ENCODE measurements at regions of chr5 and their contacts with region 1.

Region 1: GRCh38 chr5:55172051-55172899 is 702 bp downstream of the CDC20B start:
- DNase-seq: peak; percentile 73
- ATAC-seq: peak; percentile 71
- H3K4me3 Mint-ChIP-seq: peak overlapping the region; percentile 75
- H3K27ac Mint-ChIP-seq: no peak overlapping the region
- H3K4me1 Mint-ChIP-seq: peaks cover 37% of the 10 kb centered on the region
- H3K27me3 Mint-ChIP-seq: peaks cover 58% of the 10 kb centered on the region

Region 2: DNA sequence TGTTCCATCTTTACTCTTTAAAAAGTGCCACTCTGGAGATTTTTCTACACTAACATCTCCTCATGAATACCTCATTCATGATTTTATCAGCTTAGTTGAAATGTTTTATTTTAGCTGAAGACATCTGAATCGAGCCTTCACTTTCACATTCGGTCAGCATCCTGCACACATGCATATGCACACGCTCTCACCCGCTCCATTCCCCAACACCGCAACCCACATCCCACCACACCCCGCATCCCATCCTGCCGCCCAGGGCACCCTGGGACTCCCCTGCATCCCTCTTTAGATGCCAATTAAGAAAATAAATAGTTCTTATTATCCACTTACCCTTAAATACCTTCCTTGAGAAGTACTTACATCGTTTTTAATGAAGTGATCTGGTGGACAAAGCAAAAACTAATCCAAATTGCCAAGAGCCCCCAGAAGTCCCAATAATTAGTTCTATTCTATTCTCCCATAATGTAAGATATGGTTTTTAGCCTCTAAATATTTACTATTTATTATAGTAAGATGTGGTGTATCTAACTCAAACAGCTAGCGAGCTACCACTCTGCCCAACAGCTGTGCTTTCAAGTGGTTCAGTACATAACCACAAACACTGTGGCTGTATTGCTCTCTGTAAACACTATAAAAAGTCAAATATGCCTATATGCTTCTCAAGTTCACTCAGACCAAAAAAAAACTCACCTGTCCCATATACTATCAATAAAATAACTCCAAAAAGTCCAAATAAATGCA is 110.1 kb before region 1 on chr5:
- CTCF ChIA-PET with region 1: no interaction called
- POLR2A ChIA-PET with region 1: no interaction called
- intact Hi-C with region 1: no loop called
- DNase-seq: peak; percentile 81
- ATAC-seq: peak; percentile 83
- H3K4me3 Mint-ChIP-seq: peak overlapping the region; percentile 52
- H3K27ac Mint-ChIP-seq: peak overlapping the region; percentile 80
- H3K4me1 Mint-ChIP-seq: peaks cover 48% of the 10 kb centered on the region
- H3K27me3 Mint-ChIP-seq: peaks cover 4% of the 10 kb centered on the region

Region 3: GRCh38 chr5:55205001-55205400 is 32.7 kb after region 1 on chr5:
- CTCF ChIA-PET with region 1: no interaction called
- POLR2A ChIA-PET with region 1: no interaction called
- intact Hi-C with region 1: no loop called
- DNase-seq: no peak
- ATAC-seq: no peak
- H3K4me3 Mint-ChIP-seq: no peak overlapping the region
- H3K27ac Mint-ChIP-seq: no peak overlapping the region
- H3K4me1 Mint-ChIP-seq: no peaks in the 10 kb centered on the region
- H3K27me3 Mint-ChIP-seq: peaks cover 27% of the 10 kb centered on the region

Region 4: DNA sequence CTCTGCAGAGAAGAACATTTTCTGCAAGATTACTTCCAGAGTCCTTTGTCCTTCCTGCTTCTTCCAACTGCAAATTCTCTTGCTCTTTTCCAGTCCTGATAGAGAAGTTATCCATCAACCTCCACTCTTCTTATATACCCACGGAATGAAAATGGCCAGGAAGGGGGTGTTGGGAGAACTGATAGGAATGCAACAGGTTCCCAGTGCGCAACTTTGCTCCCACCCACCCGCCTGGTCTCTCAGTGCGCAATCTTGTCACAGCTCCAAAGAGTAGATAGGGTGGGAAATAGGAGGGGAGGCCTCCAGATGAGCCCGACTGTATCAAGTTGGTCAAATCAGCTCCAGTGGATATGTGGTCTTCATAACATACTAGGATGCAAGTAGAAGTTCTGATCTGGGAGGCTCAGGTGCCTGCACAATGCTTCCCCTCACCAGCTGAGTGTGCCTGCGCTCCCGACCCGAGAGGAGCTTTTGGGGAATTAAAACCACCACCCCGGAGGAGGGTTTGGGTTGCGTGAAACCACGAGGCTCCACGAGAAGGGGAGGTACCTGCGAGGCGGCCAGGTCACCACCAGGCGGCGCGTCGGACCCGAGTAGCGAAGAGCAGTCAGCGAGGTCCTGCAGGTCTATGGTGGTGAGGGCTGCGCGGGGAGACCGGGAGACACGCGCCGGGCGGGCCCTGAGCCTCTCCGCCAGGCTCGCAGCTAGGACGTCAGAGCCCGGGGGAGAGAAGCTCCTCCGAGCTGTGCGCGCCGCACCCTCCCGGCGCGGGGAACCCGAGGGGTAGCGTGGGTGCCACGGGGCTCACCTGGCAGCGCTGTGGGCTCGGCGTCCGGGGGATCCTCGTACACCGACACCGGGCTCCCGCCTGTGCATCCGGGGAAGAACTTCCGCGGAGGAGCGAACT is 54.0 kb after region 1 on chr5:
- CTCF ChIA-PET with region 1: interaction called, 6 read pairs
- POLR2A ChIA-PET with region 1: interaction called, 4 read pairs
- intact Hi-C with region 1: loop called (anchors 1 to 2 kb)
- DNase-seq: peak; percentile 88
- ATAC-seq: peak; percentile 70
- H3K4me3 Mint-ChIP-seq: peak overlapping the region; percentile 61
- H3K27ac Mint-ChIP-seq: no peak overlapping the region
- H3K4me1 Mint-ChIP-seq: peaks cover 37% of the 10 kb centered on the region
- H3K27me3 Mint-ChIP-seq: peaks cover 78% of the 10 kb centered on the region

Region 5: DNA sequence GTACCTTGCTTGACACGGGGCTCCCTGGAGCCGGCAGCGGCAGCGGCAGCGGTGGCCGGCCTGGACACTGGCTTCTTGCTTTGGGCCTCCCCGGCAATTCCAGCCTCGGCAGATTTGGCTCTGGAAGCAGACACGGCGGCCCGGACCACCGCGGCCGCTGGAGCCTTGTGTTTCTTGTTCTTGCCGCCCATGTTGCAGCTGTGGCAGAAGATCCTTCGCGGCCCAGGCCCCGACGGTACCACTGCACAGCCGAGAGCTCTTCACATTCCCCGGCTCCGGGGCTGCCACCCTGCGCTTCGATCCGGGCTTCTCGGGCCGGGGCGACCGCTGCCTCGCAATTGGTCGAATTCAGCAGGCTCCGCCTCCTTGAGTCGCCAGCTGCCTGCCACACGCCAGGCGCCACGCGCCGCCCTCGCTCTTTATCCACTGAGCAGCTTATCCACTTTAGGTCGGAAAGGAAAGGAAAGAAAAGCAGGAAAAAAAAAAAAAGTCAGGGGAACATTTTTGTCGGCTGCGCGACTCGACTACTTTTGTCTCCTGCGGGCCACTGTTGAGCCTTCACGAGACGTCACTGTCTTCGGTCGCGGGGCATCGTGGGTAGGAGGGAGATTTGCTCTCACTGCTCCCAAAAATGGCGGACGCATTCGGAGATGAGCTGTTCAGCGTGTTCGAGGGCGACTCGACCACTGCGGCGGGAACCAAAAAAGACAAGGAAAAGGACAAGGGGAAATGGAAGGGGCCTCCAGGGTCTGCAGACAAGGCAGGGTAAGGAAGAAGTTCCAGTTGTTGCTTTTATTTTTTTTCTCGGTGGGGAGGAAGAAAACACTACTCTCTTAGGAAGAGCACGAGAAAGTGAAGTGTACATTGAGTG is 135.3 kb after region 1 on chr5 and contains the starts of genes DHX29 and MTREX:
- CTCF ChIA-PET with region 1: interaction called, 5 read pairs
- POLR2A ChIA-PET with region 1: no interaction called
- intact Hi-C with region 1: loop called (anchors 1 kb)
- DNase-seq: peak; percentile 93
- ATAC-seq: peak; percentile 94
- H3K4me3 Mint-ChIP-seq: no peak within 1 kb of the TSS
- H3K27ac Mint-ChIP-seq: no peak within 1 kb of the TSS
- H3K4me1 Mint-ChIP-seq: peaks cover 30% of the 10 kb centered on the region
- H3K27me3 Mint-ChIP-seq: no peaks in the 10 kb centered on the region
- total RNA-seq, gene DHX29: 12.1 to 12.9 TPM
- total RNA-seq, gene MTREX: 98.2 to 106 TPM

Region 6: GRCh38 chr5:55377810-55378209 is 205.5 kb after region 1 on chr5:
- CTCF ChIA-PET with region 1: no interaction called
- POLR2A ChIA-PET with region 1: no interaction called
- intact Hi-C with region 1: no loop called
- DNase-seq: no peak
- ATAC-seq: no peak
- H3K4me3 Mint-ChIP-seq: no peak overlapping the region
- H3K27ac Mint-ChIP-seq: no peak overlapping the region
- H3K4me1 Mint-ChIP-seq: peaks cover 9% of the 10 kb centered on the region
- H3K27me3 Mint-ChIP-seq: no peaks in the 10 kb centered on the region

Region 7: GRCh38 chr5:55534436-55535198 is 362.3 kb after region 1 on chr5 and contains the start of gene PLPP1:
- CTCF ChIA-PET with region 1: interaction called, 5 read pairs
- POLR2A ChIA-PET with region 1: no interaction called
- intact Hi-C with region 1: loop called in 1 of 2 experiments (anchors 1 kb)
- DNase-seq: peak; percentile 91
- ATAC-seq: peak; percentile 89
- H3K4me3 Mint-ChIP-seq: peak within 1 kb of the TSS; percentile 79
- H3K27ac Mint-ChIP-seq: peak within 1 kb of the TSS; percentile 88
- H3K4me1 Mint-ChIP-seq: peaks cover 27% of the 10 kb centered on the region
- H3K27me3 Mint-ChIP-seq: no peaks in the 10 kb centered on the region
- total RNA-seq, gene PLPP1: 7.9 to 8.2 TPM

Region 8: GRCh38 chr5:55711968-55712859 is 539.9 kb after region 1 on chr5 and contains the start of gene SLC38A9:
- CTCF ChIA-PET with region 1: no interaction called
- POLR2A ChIA-PET with region 1: no interaction called
- intact Hi-C with region 1: loop called in 1 of 2 experiments (anchors 1 kb)
- DNase-seq: peak; percentile 97
- ATAC-seq: peak; percentile 100
- H3K4me3 Mint-ChIP-seq: peak within 1 kb of the TSS; percentile 93
- H3K27ac Mint-ChIP-seq: peak within 1 kb of the TSS; percentile 92
- H3K4me1 Mint-ChIP-seq: peaks cover 24% of the 10 kb centered on the region
- H3K27me3 Mint-ChIP-seq: no peaks in the 10 kb centered on the region
- total RNA-seq, gene SLC38A9: 12.9 to 16.2 TPM

Region 9: GRCh38 chr5:55982957-55983381 is 810.7 kb after region 1 on chr5:
- CTCF ChIA-PET with region 1: no interaction called
- POLR2A ChIA-PET with region 1: no interaction called
- intact Hi-C with region 1: loop called in 1 of 2 experiments (anchors 5 kb)
- DNase-seq: peak; percentile 46
- ATAC-seq: peak; percentile 24
- H3K4me3 Mint-ChIP-seq: peak overlapping the region; percentile 37
- H3K27ac Mint-ChIP-seq: peak overlapping the region; percentile 67
- H3K4me1 Mint-ChIP-seq: peaks cover 77% of the 10 kb centered on the region
- H3K27me3 Mint-ChIP-seq: no peaks in the 10 kb centered on the region

Measured in activated CD4-positive, alpha-beta T cell treated with anti-CD3 and anti-CD28 coated beads for 36 hours (primary cell).